PC-3 (cell line): ENCODE measurements at regions of chr17 and their contacts with region 1.

Region 1: DNA sequence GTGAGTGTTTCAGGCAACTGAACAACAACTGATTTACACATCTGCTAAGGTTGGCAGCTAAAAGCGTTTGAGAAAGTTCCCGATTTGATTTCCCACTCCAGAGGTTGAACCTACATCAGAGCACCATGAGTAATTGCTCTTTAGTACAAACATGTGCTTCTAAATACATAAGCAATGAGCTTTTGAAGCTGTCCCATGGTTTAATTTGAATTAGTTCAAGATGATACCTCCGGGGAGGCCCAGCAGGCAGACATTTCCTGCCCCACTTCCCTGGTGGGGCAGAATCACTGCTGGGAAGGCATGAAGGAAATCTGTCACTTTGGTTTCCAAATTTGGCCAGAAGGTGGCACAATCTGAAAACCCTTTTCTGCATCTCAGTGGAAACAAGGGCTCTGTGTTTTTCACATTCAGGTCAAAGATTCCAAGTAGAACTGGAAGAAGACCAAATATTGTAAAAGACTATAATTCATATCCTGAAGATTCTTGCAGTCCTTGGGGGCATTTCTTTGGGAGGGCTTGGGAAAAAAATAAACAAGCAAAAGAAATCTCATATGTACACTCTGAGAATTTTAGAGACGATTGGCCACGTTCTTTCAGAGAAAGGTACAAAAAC is 176.2 kb upstream of the FAM20A start:
- DNase-seq: peak; percentile 83
- ATAC-seq: peak; percentile 58
- H3K4me3 ChIP-seq: no peak overlapping the region
- H3K27ac ChIP-seq: no peak overlapping the region
- H3K4me1 ChIP-seq: peaks cover 13% of the 10 kb centered on the region
- H3K27me3 ChIP-seq: peaks cover 5% of the 10 kb centered on the region; the same call in 1 of the 2 replicates
- CTCF ChIP-seq: peak; percentile 93

Region 2: GRCh38 chr17:68972119-68972704 is 194.9 kb after region 1 on chr17:
- CTCF ChIA-PET with region 1: interaction called, 4 read pairs
- POLR2A ChIA-PET with region 1: no interaction called
- intact Hi-C with region 1: loop called (anchors 1 kb)
- DNase-seq: peak; percentile 62
- ATAC-seq: peak; percentile 65
- H3K4me3 ChIP-seq: no peak overlapping the region
- H3K27ac ChIP-seq: no peak overlapping the region
- H3K4me1 ChIP-seq: no peaks in the 10 kb centered on the region
- H3K27me3 ChIP-seq: peaks cover 8% of the 10 kb centered on the region
- CTCF ChIP-seq: peak; percentile 89